ENCODE measurements at regions of chr3 and their contacts with region 1.

Region 1: DNA sequence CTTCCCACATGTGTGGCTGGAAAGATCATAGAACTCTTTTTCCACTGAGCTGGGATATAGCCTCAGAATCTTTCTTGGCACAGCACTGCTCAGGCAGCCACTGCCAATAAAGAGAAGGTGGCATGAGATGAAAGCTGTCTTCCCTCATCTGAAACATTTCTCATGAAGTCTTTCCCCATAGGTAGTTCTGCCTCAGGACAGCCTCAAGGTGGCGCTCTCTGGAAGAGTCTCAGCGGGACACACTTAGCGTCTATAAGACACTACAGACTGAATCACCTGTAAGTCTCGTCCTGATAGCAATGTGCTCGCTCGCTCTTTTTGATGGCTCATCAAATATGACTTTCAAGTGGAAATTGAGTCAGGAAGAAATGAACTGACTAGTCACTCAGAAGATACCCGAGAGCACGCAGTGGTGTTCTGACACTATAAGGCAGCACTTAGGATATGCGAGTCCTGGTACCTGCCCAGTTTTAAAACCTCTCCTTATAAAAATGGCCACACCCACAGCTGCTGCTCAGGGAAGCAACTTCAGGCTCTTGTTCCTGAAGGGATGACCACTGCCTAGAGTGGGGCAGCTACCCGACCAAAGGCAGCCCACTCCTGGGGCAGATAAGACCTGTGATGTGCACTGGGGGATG is 269.5 kb downstream of the SUCLG2 start:
- DNase-seq: peak in 38 of 42 donors; percentile 15 to 71 (median 48)

Region 2: DNA sequence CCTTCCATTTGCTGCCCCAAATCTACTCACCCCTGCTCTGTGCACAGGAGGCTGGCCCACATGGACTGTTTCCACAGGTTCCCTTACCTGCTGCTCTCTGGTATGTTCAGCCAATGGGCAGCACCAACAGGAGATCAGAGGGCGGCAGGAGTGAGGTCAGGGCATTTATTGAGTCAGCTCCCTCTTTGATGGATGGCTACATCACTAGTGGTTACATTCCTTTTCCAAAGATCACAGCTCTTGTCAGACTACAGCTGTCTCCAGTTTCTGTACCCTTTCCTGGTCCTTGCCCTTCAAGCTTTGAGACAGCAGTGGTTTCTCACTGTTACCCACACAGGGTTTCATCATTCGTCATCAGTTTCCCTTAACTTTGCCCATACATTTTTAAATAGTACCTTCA is 55.5 kb before region 1 on chr3:
- intact Hi-C with region 1: no loop called
- DNase-seq: no peak

Region 3: GRCh38 chr3:67421912-67422311 is 37.0 kb after region 1 on chr3:
- intact Hi-C with region 1: no loop called
- DNase-seq: no peak

Region 4: GRCh38 chr3:68876112-68876713 is 1491.3 kb after region 1 on chr3:
- intact Hi-C with region 1: loop called (anchors 5 kb)
- DNase-seq: peak in 29 of 42 donors; percentile 8 to 77 (median 48)